Body of pancreas (tissue), 4 donors: ENCODE measurements at regions of chr4 and their contacts with region 1.

Region 1: GRCh38 chr4:150242820-150243458 is 164.7 kb downstream of the DCLK2 start:
- DNase-seq: peak in 3 of 4 donors; percentile 18 to 50 (median 39)
- ATAC-seq: peak; percentile 55
- H3K4me3 ChIP-seq: no peak overlapping the region
- H3K27ac ChIP-seq: no peak overlapping the region
- H3K4me1 ChIP-seq: peaks cover 12% of the 10 kb centered on the region
- H3K27me3 ChIP-seq: no peaks in the 10 kb centered on the region
- CTCF ChIP-seq: peak; percentile 59 to 89 (median 81)
- POLR2A ChIP-seq: no peak

Region 2: GRCh38 chr4:149999485-150000074 is 243.4 kb before region 1 on chr4:
- intact Hi-C with region 1: loop called (anchors 10 kb)
- DNase-seq: peak; percentile 21 to 54 (median 47)
- ATAC-seq: no peak
- H3K4me3 ChIP-seq: no peak overlapping the region
- H3K27ac ChIP-seq: no peak overlapping the region
- H3K4me1 ChIP-seq: peaks cover 10% of the 10 kb centered on the region
- H3K27me3 ChIP-seq: no peaks in the 10 kb centered on the region
- CTCF ChIP-seq: peak; percentile 44 to 77 (median 66)
- POLR2A ChIP-seq: no peak

Region 3: GRCh38 chr4:150173982-150174398 is 68.9 kb before region 1 on chr4:
- intact Hi-C with region 1: no loop called
- DNase-seq: no peak
- ATAC-seq: peak; percentile 52
- H3K4me3 ChIP-seq: no peak overlapping the region
- H3K27ac ChIP-seq: peak overlapping the region in 1 of 4 donors; percentile 23
- H3K4me1 ChIP-seq: peaks cover 9% of the 10 kb centered on the region
- H3K27me3 ChIP-seq: no peaks in the 10 kb centered on the region
- CTCF ChIP-seq: no peak
- POLR2A ChIP-seq: no peak

Region 4: GRCh38 chr4:150192986-150193385 is 50.0 kb before region 1 on chr4:
- intact Hi-C with region 1: no loop called
- DNase-seq: no peak
- ATAC-seq: no peak
- H3K4me3 ChIP-seq: no peak overlapping the region
- H3K27ac ChIP-seq: no peak overlapping the region
- H3K4me1 ChIP-seq: no peaks in the 10 kb centered on the region
- H3K27me3 ChIP-seq: no peaks in the 10 kb centered on the region
- CTCF ChIP-seq: no peak
- POLR2A ChIP-seq: no peak